ENCODE measurements at regions of chr11 and their contacts with region 1.

Region 1: DNA sequence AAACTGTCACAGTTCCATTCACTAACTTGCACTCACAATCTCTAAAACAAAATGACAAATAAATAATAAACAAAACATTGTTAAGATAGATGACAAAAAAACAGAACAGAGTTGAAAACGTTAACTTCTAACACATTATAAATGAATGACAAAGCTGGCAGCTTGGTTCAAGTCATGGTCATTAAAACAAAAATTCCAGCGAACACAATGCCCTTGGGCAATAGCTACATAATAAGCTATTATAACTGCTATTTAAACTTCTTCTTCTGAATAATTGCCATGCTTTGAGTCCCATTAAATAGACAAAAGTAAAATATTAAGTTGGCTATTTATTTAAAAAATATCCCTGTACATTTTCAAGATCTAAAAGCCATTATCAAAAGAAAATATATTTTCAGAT is 54.7 kb downstream of the PICALM start:
- H3K4me3 Mint-ChIP-seq: no peak overlapping the region
- H3K27ac Mint-ChIP-seq: no peak overlapping the region
- H3K4me1 Mint-ChIP-seq: peaks cover 18% of the 10 kb centered on the region
- H3K27me3 Mint-ChIP-seq: no peaks in the 10 kb centered on the region

Region 2: DNA sequence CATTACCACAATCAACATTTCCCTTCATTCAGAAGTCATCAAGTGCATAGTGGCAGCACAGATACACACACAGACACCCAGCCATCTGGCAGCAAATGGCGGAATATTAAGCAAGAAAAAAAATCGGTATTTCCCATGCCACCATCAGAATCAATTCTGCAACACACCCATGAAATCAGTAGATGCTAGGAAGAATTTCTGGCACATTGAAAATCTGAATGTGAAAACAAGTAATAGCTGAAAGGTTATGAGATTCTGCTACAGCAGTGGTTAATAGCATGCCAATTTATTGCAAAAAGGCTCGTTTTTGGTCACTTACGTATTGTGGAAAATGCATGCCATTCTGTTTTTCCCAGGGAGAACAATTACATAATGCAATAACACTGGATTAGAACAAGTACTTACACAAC is 36.5 kb before region 1 on chr11:
- intact Hi-C with region 1: loop called (anchors 5 kb)
- H3K4me3 Mint-ChIP-seq: no peak overlapping the region
- H3K27ac Mint-ChIP-seq: no peak overlapping the region
- H3K4me1 Mint-ChIP-seq: peaks cover 5% of the 10 kb centered on the region
- H3K27me3 Mint-ChIP-seq: no peaks in the 10 kb centered on the region

Region 3: DNA sequence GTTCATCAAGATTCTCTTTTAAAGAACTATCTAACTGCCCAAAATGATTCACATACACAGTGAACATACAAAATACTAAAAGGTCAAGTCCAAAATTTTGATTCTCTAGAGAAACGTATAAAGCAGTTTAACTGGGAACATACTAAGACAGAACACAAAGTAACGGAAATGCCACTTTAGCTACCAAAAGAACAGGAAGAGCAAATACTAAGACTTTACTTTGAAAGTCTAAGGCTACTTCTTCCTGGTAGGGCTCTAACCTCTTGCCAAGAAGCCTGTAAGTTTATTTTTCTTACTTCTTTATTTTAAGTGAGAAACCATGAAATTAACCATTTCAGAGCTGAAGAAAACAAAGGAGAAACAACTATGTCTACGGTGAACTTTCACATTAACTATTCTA is 48.5 kb after region 1 on chr11:
- intact Hi-C with region 1: no loop called
- H3K4me3 Mint-ChIP-seq: peak overlapping the region; percentile 57
- H3K27ac Mint-ChIP-seq: peak overlapping the region; percentile 99
- H3K4me1 Mint-ChIP-seq: peaks cover 58% of the 10 kb centered on the region
- H3K27me3 Mint-ChIP-seq: no peaks in the 10 kb centered on the region

Region 4: DNA sequence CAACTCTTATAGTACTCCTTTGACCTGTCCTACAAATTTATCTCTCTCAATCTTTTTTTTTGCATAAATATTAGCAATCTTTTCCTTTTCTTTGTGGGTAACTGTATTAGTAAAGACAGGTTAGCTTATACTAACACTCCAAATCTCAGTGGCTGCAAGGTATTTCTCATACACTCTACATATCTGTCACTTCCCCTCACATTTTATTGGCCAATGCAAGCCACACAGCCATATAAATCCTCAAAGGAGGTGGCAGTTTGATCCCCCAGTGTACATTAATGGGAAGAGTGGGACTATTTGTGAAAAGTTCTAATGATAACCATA is 187.8 kb after region 1 on chr11:
- intact Hi-C with region 1: no loop called
- H3K4me3 Mint-ChIP-seq: no peak overlapping the region
- H3K27ac Mint-ChIP-seq: no peak overlapping the region
- H3K4me1 Mint-ChIP-seq: peaks cover 28% of the 10 kb centered on the region
- H3K27me3 Mint-ChIP-seq: no peaks in the 10 kb centered on the region